ENCODE measurements at regions of chr2 and their contacts with region 1.

Region 1: DNA sequence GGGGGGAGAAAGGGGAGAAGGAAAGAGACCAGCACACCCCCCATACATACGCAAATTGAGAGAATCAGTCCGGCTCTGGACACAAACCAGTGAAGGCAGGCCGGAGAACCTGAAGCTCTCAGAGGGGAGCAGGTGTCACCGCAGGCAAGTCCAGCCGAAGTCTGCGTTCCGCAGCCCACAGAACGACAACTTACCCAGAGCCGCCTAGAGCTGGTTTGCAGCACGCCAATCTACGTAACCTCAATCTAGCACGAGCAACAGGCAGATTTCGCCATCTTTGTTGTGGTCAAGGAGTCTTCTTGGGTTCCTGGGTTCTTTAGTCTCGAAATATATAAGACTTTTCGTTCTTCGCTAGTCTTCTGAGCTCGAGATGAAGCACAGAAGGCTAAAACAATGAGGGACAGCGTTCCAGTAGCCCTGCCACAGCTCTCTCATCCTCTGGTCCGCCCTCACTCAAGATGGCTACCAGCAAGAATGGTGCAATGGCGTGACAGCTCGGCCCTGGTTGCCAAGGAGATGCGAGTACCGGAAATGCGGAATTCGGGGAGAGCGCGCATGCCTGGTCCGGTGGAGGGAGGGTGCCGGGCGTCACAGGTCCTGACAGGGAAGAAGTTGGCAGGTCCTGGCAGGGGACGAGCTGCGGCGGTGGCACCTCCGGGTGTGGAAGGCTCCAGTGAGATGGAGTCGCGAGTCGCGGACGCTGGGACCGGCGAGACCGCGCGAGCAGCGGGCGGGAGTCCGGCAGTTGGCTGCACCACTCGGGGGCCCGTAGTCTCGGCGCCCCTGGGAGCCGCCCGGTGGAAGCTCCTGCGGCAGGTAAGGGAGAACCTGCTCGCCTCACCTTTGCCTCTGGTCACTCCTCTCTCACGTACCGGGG is at the starts of genes CAMKMT and PREPL:
- DNase-seq: peak; percentile 99
- H3K4me3 Mint-ChIP-seq: peak within 1 kb of the TSS; percentile 90
- H3K27ac Mint-ChIP-seq: peak within 1 kb of the TSS; percentile 96
- H3K4me1 Mint-ChIP-seq: peaks cover 38% of the 10 kb centered on the region
- H3K27me3 Mint-ChIP-seq: no peaks in the 10 kb centered on the region

Region 2: DNA sequence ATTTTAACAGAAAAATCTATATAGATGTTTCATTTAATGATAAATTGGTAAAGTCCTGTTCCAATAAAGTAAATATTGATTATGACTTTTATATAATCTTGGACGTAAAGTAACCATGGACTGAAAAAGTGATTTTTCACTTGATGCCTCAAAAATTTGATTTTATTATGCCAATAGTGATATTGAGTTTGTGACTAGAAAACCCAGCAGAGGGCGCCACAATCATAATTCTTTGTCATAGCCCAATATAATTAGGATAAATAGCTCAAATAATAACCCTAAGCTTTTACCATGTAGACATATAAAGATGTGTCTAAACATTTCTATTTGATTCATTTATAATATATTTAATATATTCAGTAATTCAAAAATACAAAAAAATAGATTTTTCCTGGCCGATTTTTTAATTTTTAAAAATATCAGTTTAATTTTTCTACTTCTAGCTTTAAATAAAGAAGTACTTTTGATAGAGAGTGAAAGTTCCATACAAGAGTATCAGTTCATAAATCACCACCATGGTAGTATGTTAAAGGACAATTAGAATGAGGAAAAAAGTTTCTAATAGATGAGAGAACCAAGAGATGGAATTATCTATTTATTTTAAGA is 30.9 kb after region 1 on chr2:
- CTCF ChIA-PET with region 1: interaction called, 10 read pairs
- DNase-seq: peak; percentile 60
- H3K4me3 Mint-ChIP-seq: no peak overlapping the region
- H3K27ac Mint-ChIP-seq: no peak overlapping the region
- H3K4me1 Mint-ChIP-seq: no peaks in the 10 kb centered on the region
- H3K27me3 Mint-ChIP-seq: no peaks in the 10 kb centered on the region

Region 3: DNA sequence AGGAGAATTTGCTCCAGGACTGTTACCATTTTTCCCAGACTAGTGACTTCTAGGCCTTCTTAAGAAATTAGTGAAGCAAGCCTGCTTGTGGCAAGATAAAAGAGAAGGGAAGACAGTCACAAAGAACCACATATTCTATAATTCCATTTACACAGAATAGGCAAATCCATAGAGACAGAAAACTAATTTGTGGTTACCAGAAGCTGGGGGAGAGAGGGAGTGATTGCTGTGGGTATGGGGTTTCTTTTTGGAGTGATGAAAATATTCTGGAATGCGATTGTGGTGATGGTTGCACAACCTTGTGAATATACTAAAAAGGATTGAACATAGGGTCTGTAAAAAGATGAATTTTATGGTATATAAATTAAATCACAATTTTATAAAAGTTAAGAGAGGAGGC is 685.2 kb after region 1 on chr2:
- CTCF ChIA-PET with region 1: no interaction called
- DNase-seq: no peak
- H3K4me3 Mint-ChIP-seq: no peak overlapping the region
- H3K27ac Mint-ChIP-seq: no peak overlapping the region
- H3K4me1 Mint-ChIP-seq: no peaks in the 10 kb centered on the region
- H3K27me3 Mint-ChIP-seq: peaks cover 21% of the 10 kb centered on the region